ENCODE measurements at regions of chr4 and their contacts with region 1.

Region 1: GRCh38 chr4:7802093-7802726 is 137.5 kb downstream of the AFAP1 start:
- DNase-seq: peak; percentile 63
- H3K4me3 Mint-ChIP-seq: no peak overlapping the region
- H3K27ac Mint-ChIP-seq: no peak overlapping the region
- H3K4me1 Mint-ChIP-seq: peaks cover 11% of the 10 kb centered on the region
- H3K27me3 Mint-ChIP-seq: no peaks in the 10 kb centered on the region

Region 2: GRCh38 chr4:7719354-7720174 is 82.6 kb before region 1 on chr4:
- intact Hi-C with region 1: loop called (anchors 1 kb)
- DNase-seq: peak; percentile 17
- H3K4me3 Mint-ChIP-seq: no peak overlapping the region
- H3K27ac Mint-ChIP-seq: no peak overlapping the region
- H3K4me1 Mint-ChIP-seq: no peaks in the 10 kb centered on the region
- H3K27me3 Mint-ChIP-seq: peaks cover 5% of the 10 kb centered on the region

Region 3: DNA sequence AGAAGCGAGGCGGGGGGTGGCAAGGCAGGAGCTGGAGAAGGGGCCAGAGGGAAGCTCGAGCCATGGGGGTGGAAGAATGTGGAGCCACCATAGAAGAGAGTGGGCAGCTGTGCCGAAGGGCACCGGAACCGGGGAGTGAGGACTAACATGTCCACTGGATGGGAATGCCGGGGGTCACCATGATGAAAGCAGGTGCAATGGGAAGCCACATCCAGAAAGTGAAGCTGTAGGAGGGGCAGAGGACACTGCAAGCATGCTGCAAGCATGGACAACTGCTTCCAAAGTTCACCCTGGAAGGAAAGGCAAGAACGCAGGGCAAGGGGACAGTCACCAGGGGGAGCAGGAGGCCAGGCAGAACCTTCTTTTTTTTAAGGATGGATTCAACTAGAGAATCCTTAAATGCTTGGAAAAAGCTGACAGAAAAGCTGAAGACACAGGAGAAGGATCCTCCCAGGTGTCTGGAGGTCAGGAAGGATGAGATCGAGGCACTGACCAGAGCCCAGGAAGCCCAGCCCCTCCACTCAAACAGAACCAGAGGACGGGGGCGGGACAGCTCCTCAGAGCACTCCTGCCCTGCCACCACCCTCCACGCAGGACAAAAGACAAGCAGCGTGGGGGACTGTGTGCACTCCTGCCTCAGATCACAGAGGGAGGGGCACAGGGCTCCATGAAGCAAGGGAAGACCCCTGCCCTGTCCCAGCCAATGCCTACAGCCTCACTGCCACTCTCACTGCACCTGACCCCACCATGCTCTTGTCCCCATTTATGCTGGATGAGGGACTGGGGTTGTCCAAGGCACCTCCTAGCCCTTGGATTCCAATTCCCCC is 31.8 kb before region 1 on chr4:
- intact Hi-C with region 1: loop called (anchors 1 kb)
- DNase-seq: no peak
- H3K4me3 Mint-ChIP-seq: no peak overlapping the region
- H3K27ac Mint-ChIP-seq: peak overlapping the region; percentile 19
- H3K4me1 Mint-ChIP-seq: peaks cover 22% of the 10 kb centered on the region
- H3K27me3 Mint-ChIP-seq: peaks cover 2% of the 10 kb centered on the region

Region 4: GRCh38 chr4:7857238-7857701 is 55.1 kb after region 1 on chr4:
- intact Hi-C with region 1: loop called (anchors 1 kb)
- DNase-seq: no peak
- H3K4me3 Mint-ChIP-seq: peak overlapping the region; percentile 54
- H3K27ac Mint-ChIP-seq: peak overlapping the region; percentile 93
- H3K4me1 Mint-ChIP-seq: peaks cover 60% of the 10 kb centered on the region
- H3K27me3 Mint-ChIP-seq: peaks cover 16% of the 10 kb centered on the region

Region 5: GRCh38 chr4:7960790-7961655 is 158.8 kb after region 1 on chr4:
- intact Hi-C with region 1: no loop called
- DNase-seq: peak; percentile 70
- H3K4me3 Mint-ChIP-seq: peak overlapping the region; percentile 3
- H3K27ac Mint-ChIP-seq: peak overlapping the region; percentile 73
- H3K4me1 Mint-ChIP-seq: peaks cover 66% of the 10 kb centered on the region
- H3K27me3 Mint-ChIP-seq: peaks cover 4% of the 10 kb centered on the region